ENCODE measurements at regions of chr2 and their contacts with region 1.

Region 1: GRCh38 chr2:74919827-74920226 is 38.6 kb upstream of the POLE4 start:
- DNase-seq: peak; percentile 46 to 76 (median 66)
- H3K4me3 ChIP-seq: peak overlapping the region in 1 of 4 donors; percentile 34
- H3K27ac ChIP-seq: no peak overlapping the region
- H3K4me1 ChIP-seq: no peaks in the 10 kb centered on the region
- H3K27me3 ChIP-seq: peaks cover 3% of the 10 kb centered on the region
- CTCF ChIP-seq: peak; percentile 83 to 93 (median 86)
- POLR2A ChIP-seq: no peak

Region 2: GRCh38 chr2:74982577-74982976 is 62.8 kb after region 1 on chr2:
- intact Hi-C with region 1: no loop called
- DNase-seq: peak in 1 of 7 donors; percentile 20
- H3K4me3 ChIP-seq: no peak overlapping the region
- H3K27ac ChIP-seq: no peak overlapping the region
- H3K4me1 ChIP-seq: no peaks in the 10 kb centered on the region
- H3K27me3 ChIP-seq: no peaks in the 10 kb centered on the region
- CTCF ChIP-seq: peak in 2 of 6 experiments; percentile 25 to 33
- POLR2A ChIP-seq: no peak

Region 3: GRCh38 chr2:75064691-75065396 is 145.0 kb after region 1 on chr2:
- intact Hi-C with region 1: loop called in 1 of 2 experiments (anchors 10 kb)
- DNase-seq: peak; percentile 27 to 76 (median 53)
- H3K4me3 ChIP-seq: no peak overlapping the region
- H3K27ac ChIP-seq: no peak overlapping the region
- H3K4me1 ChIP-seq: no peaks in the 10 kb centered on the region
- H3K27me3 ChIP-seq: no peaks in the 10 kb centered on the region
- CTCF ChIP-seq: peak; percentile 36 to 80 (median 66)
- POLR2A ChIP-seq: no peak

Region 4: DNA sequence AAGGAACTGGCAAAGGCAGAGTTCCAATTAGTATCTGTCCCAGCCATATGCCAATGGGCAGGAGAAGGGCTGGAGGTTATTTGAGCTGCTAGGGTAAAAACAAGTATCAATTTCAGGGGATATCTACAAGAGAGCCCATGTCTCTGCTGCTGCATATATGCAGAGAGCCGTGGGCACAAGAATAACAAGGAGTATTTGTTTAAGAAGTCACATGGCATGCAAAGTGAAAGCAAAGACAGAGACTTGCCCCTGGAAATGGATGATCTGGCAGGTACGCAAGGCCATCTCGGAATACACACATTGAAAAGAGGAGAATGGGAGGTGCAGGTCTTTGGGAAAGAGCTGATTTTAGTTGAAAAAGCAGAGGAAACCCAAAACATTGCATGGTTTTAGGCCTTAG is 470.3 kb after region 1 on chr2:
- intact Hi-C with region 1: loop called in 1 of 2 experiments (anchors 10 kb)
- DNase-seq: no peak
- H3K4me3 ChIP-seq: no peak overlapping the region
- H3K27ac ChIP-seq: no peak overlapping the region
- H3K4me1 ChIP-seq: no peaks in the 10 kb centered on the region
- H3K27me3 ChIP-seq: no peaks in the 10 kb centered on the region
- CTCF ChIP-seq: no peak
- POLR2A ChIP-seq: no peak

Region 5: DNA sequence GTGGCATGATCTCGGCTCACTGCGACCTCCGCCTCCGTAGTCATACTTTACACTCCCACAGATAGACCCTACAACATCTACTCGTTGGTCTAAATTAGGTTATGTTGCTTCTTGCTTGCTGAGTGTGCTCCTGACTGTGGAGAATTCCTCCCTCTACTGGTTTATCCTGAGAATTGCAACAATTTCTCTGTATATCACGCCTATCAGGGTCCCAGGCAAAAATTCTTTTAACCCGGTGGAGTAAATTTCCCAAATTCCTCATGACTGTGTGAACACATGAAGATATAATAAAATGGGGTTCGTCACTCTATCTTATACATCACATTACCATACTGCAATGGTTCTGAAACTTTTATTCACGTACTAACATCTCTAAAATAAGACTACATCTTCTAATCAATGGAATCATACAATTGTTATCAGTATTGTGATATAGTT is 484.2 kb after region 1 on chr2:
- intact Hi-C with region 1: loop called (anchors 5 to 10 kb)
- DNase-seq: peak in 1 of 7 donors; percentile 5
- H3K4me3 ChIP-seq: no peak overlapping the region
- H3K27ac ChIP-seq: no peak overlapping the region
- H3K4me1 ChIP-seq: no peaks in the 10 kb centered on the region
- H3K27me3 ChIP-seq: peaks cover 12% of the 10 kb centered on the region
- CTCF ChIP-seq: peak; percentile 58 to 81 (median 71)
- POLR2A ChIP-seq: no peak

Region 6: GRCh38 chr2:75416420-75417342 is 496.9 kb after region 1 on chr2:
- intact Hi-C with region 1: loop called in 1 of 2 experiments (anchors 10 kb)
- DNase-seq: no peak
- H3K4me3 ChIP-seq: no peak overlapping the region
- H3K27ac ChIP-seq: no peak overlapping the region
- H3K4me1 ChIP-seq: no peaks in the 10 kb centered on the region
- H3K27me3 ChIP-seq: peaks cover 2% of the 10 kb centered on the region
- CTCF ChIP-seq: no peak
- POLR2A ChIP-seq: no peak

Region 7: DNA sequence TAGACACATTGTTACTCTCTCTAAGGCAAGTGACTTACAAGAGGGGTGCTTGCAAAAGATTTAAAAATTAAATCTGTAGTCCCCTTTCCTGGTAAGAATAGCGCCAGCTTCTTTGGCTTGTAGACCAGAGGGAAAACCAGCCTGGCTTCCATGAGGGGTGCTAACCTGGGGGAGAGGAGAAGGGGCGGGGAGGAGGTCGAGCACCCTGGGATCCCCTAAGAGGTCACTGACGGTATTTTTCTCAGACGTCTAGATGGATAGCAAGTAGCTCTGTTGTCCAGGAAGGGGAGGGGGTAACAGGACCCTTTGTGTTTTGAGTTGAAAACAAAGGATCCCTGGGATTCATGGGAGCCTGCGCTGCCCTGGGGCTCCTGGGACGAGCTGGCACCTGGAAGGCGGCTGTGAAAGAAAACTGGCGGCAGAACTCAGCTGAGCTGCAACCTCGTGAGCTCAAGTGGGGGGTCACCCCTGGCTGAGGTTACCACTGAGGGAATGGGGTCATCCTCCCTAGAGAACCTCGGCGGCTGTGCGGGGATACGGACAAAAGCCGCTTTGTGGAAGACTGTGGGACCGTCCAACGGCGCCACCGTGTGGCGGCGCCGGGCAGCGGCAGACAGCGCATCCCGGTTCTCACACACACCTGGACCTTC is 689.0 kb after region 1 on chr2:
- intact Hi-C with region 1: loop called in 1 of 2 experiments (anchors 10 kb)
- DNase-seq: peak; percentile 20 to 73 (median 49)
- H3K4me3 ChIP-seq: no peak overlapping the region
- H3K27ac ChIP-seq: no peak overlapping the region
- H3K4me1 ChIP-seq: no peaks in the 10 kb centered on the region
- H3K27me3 ChIP-seq: no peaks in the 10 kb centered on the region
- CTCF ChIP-seq: peak; percentile 66 to 93 (median 81)
- POLR2A ChIP-seq: no peak

Measured in adrenal gland (tissue), 19 donors.